Activated naive CD4-positive, alpha-beta T cell treated with anti-CD3 and anti-CD28 coated beads for 36 hours (primary cell): ENCODE measurements at regions of chr6 and their contacts with region 1.

Region 1: DNA sequence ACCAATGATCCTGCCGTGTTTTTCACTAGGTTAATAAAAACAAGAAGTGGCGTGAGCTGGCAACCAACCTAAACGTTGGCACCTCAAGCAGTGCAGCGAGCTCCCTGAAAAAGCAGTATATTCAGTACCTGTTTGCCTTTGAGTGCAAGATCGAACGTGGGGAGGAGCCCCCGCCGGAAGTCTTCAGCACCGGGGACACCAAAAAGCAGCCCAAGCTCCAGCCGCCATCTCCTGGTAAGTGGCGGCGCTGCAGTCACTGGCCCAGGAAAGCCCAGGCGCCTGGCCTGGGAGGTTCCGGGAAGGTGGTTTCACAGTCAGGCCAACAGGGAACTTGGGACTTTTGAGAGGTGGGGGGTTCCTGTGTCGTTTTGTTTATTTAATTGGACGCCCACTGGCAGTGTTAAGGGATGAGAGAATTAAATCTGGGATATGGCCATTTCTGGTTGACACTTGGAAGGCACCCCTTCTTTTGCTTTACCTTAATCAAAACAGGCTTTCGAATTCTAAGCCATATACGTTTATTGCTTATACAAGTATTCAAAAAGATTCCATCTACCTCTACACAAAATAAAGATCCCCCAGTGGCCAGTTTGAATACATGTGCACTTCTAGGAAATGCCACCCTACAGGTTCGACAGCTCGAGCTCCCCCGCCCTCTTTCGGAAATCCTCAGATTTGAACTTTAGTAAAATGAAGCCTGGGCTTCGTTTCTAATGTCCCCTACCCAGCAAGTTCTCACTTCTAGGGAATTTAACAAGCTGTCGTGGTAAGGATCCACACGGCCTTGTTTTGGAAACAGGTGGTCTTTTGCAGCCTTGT is 138.9 kb downstream of the TMEM242 start:
- DNase-seq: peak; percentile 69
- H3K4me3 Mint-ChIP-seq: no peak overlapping the region
- H3K27ac Mint-ChIP-seq: no peak overlapping the region
- H3K4me1 Mint-ChIP-seq: peaks cover 10% of the 10 kb centered on the region
- H3K27me3 Mint-ChIP-seq: no peaks in the 10 kb centered on the region

Region 2: DNA sequence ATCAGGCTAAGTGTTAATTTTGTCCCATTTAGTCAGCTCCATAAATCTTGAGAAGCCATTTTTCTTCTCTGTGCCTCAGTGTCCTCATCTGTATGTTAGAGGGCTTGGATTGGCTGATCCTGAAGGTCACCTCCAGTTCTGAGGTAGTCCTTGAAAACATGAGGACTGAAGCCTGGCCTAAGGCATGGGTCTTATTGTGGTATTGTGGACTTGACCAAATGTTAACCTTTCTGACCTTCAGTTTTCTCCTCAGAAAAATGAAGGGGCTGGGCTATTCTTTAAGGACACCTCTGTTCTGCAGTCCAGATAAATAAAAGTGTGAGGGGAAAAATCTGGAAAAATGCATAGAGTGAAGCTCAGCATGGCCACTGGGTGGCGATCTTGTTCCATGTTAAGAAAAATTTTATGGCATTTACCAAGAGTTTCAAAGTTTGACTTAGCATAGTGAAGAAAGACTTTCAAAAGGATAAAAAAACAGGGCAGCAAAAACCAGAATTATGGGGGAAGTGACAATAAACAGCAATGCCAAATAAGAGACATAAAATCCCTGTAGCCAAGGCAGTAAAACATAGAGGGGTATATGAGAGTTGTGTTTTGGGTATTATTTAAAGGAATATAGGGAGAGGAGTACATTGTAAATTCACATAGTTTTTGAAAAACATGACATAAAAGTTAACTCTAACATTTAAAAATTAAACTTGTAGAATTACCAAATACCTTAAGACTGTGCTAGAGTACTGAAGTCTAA is 1856.9 kb before region 1 on chr6:
- CTCF ChIA-PET with region 1: no interaction called
- intact Hi-C with region 1: loop called (anchors 5 kb)
- DNase-seq: peak; percentile 81
- H3K4me3 Mint-ChIP-seq: no peak overlapping the region
- H3K27ac Mint-ChIP-seq: peak overlapping the region; percentile 57
- H3K4me1 Mint-ChIP-seq: peaks cover 28% of the 10 kb centered on the region
- H3K27me3 Mint-ChIP-seq: no peaks in the 10 kb centered on the region

Region 3: GRCh38 chr6:157099912-157100593 is 84.4 kb before region 1 on chr6:
- CTCF ChIA-PET with region 1: no interaction called
- intact Hi-C with region 1: no loop called
- DNase-seq: peak; percentile 80
- H3K4me3 Mint-ChIP-seq: no peak overlapping the region
- H3K27ac Mint-ChIP-seq: peak overlapping the region; percentile 84
- H3K4me1 Mint-ChIP-seq: peaks cover 55% of the 10 kb centered on the region
- H3K27me3 Mint-ChIP-seq: no peaks in the 10 kb centered on the region

Region 4: GRCh38 chr6:157148391-157149323 is 35.8 kb before region 1 on chr6:
- CTCF ChIA-PET with region 1: no interaction called
- intact Hi-C with region 1: no loop called
- DNase-seq: no peak
- H3K4me3 Mint-ChIP-seq: no peak overlapping the region
- H3K27ac Mint-ChIP-seq: no peak overlapping the region
- H3K4me1 Mint-ChIP-seq: peaks cover 5% of the 10 kb centered on the region
- H3K27me3 Mint-ChIP-seq: no peaks in the 10 kb centered on the region